ENCODE measurements at regions of chr12 and their contacts with region 1.

Region 1: DNA sequence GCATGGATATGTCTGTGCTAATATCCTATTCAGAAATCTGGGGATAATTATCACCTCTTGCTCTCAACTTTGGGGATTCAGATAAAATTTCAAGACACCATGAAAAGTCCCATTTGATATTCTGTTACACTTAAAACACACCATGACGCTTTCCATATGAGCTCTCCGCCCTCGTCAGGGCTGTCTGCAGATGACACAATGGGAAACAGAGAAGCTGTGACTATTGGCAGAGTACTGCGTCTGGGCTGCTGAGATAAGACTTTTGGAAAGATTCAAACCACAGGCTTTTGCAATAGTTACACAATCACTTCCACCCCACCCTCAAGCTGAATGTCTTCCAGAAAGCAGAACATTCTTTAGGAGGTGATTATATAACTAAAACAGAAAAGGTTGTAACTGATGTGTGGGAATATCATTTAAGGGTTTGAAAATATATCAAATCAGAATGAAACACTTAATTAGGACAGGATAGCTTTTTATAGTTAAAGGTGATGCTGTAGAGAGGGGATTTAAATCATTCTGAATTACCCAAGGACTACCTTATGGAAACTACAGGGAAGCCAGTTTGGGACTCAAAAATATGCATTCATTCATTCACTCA is 75.3 kb upstream of the TMPO start:
- H3K4me3 Mint-ChIP-seq: peak overlapping the region; percentile 55
- H3K27ac Mint-ChIP-seq: peak overlapping the region; percentile 92
- H3K4me1 Mint-ChIP-seq: peaks cover 50% of the 10 kb centered on the region
- H3K27me3 Mint-ChIP-seq: peaks cover 1% of the 10 kb centered on the region

Region 2: DNA sequence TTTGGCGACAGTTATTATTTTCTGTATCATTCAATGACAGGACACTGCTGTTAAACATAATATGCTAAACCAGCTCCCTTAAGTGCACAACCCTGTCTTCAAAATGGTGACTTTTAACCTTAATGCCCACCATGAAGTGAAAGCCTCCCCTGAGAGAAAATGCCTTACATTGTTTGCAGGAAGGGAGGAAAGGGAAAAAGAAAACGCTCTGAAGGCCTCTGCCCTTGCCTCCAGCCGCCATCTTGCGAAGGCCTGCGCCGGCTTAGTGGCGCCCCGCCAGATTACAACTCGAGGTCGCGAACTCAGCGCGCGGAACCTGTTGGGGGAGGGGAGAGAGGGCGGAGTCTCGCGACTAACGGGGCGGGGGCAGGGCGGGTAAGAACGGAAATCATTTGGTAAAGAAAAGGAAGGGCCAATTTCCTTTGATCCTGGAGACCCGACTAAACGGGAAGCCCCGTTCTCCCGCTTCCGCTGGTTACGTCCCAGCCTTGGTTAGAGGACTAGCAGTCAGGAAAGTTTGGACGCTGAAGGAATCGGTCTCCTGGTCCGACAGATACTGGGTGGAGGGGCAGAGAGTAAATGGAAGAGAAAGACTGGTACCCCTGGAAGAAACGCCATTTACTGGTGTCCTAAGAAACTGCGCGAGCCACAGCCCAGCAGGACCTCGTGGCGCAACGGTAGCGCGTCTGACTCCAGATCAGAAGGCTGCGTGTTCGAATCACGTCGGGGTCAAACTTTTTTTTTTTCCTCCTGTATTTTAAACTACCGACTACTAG is 63.7 kb after region 1 on chr12:
- intact Hi-C with region 1: loop called (anchors 5 kb)
- H3K4me3 Mint-ChIP-seq: peak overlapping the region; percentile 89
- H3K27ac Mint-ChIP-seq: peak overlapping the region; percentile 94
- H3K4me1 Mint-ChIP-seq: peaks cover 12% of the 10 kb centered on the region
- H3K27me3 Mint-ChIP-seq: no peaks in the 10 kb centered on the region

Region 3: GRCh38 chr12:98532681-98533304 is 92.7 kb after region 1 on chr12:
- intact Hi-C with region 1: no loop called
- H3K4me3 Mint-ChIP-seq: no peak overlapping the region
- H3K27ac Mint-ChIP-seq: no peak overlapping the region
- H3K4me1 Mint-ChIP-seq: no peaks in the 10 kb centered on the region
- H3K27me3 Mint-ChIP-seq: no peaks in the 10 kb centered on the region

Region 4: DNA sequence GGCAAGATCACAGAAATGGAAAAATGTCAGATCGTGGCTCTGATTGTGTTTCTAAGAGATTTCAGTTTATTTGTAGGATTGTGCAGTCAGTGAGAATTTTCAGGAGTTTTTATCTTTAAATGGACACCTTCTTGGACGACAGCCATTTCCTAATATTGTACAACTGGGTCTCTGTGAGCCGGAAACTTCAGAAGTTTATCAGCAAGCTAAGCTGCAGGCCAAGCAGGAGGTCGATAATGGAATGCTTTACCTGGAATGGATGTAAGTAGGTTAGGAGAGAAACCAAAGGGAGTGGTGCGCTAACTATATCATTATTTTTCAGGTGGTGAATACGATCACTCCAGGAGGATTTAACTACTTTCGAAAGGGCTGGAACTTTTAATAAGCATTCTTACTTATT is 231.4 kb after region 1 on chr12:
- intact Hi-C with region 1: no loop called
- H3K4me3 Mint-ChIP-seq: no peak overlapping the region
- H3K27ac Mint-ChIP-seq: no peak overlapping the region
- H3K4me1 Mint-ChIP-seq: no peaks in the 10 kb centered on the region
- H3K27me3 Mint-ChIP-seq: no peaks in the 10 kb centered on the region

Measured in dendritic cell treated with granulocyte-macrophage colony-stimulating factor and Interleukin-4, amounts not matched to agents 40 ng/mL and 50 ng/mL, for 4 days (primary cell).